ENCODE measurements at regions of chr10 and their contacts with region 1.

Region 1: DNA sequence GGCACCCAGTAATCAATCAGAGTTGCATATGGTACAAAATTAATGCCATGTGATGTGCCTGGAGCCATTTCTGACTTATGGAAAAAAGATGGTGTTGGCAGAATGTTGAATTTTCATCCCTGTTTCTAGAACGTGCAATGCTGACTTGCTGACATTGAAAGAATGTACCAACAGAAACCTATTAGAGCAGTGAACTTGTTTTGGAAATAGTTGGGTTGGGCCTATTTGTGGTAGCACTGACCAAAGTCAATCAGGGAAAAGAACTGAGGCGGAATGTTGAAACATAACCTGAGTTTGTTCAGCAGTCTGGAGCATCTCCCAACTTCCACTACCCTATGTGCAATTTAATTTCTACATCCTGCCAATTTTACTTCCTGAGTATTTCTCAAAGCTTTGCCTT is 11.7 kb upstream of the KIAA1217 start:
- DNase-seq: no peak
- ATAC-seq: no peak
- H3K4me3 Mint-ChIP-seq: no peak overlapping the region
- H3K27ac Mint-ChIP-seq: no peak overlapping the region
- H3K4me1 Mint-ChIP-seq: no peaks in the 10 kb centered on the region
- H3K27me3 Mint-ChIP-seq: peaks cover 7% of the 10 kb centered on the region
- CTCF ChIP-seq: no peak

Region 2: GRCh38 chr10:23994479-23995046 is 202.7 kb before region 1 on chr10:
- CTCF ChIA-PET with region 1: interaction called, 9 read pairs
- POLR2A ChIA-PET with region 1: no interaction called
- intact Hi-C with region 1: loop called (anchors 5 kb)
- DNase-seq: peak; percentile 62
- ATAC-seq: no peak
- H3K4me3 Mint-ChIP-seq: no peak overlapping the region
- H3K27ac Mint-ChIP-seq: no peak overlapping the region
- H3K4me1 Mint-ChIP-seq: no peaks in the 10 kb centered on the region
- H3K27me3 Mint-ChIP-seq: peaks cover 6% of the 10 kb centered on the region
- CTCF ChIP-seq: peak; percentile 70

Region 3: GRCh38 chr10:24209946-24210491 is 12.8 kb after region 1 on chr10:
- CTCF ChIA-PET with region 1: interaction called, 17 read pairs
- POLR2A ChIA-PET with region 1: no interaction called
- intact Hi-C with region 1: no loop called
- DNase-seq: peak; percentile 76
- ATAC-seq: peak; percentile 77
- H3K4me3 Mint-ChIP-seq: peak overlapping the region; percentile 66
- H3K27ac Mint-ChIP-seq: peak overlapping the region; percentile 70
- H3K4me1 Mint-ChIP-seq: peaks cover 25% of the 10 kb centered on the region
- H3K27me3 Mint-ChIP-seq: peaks cover 39% of the 10 kb centered on the region
- CTCF ChIP-seq: no peak